ENCODE measurements at regions of chr10 and their contacts with region 1.

Region 1: DNA sequence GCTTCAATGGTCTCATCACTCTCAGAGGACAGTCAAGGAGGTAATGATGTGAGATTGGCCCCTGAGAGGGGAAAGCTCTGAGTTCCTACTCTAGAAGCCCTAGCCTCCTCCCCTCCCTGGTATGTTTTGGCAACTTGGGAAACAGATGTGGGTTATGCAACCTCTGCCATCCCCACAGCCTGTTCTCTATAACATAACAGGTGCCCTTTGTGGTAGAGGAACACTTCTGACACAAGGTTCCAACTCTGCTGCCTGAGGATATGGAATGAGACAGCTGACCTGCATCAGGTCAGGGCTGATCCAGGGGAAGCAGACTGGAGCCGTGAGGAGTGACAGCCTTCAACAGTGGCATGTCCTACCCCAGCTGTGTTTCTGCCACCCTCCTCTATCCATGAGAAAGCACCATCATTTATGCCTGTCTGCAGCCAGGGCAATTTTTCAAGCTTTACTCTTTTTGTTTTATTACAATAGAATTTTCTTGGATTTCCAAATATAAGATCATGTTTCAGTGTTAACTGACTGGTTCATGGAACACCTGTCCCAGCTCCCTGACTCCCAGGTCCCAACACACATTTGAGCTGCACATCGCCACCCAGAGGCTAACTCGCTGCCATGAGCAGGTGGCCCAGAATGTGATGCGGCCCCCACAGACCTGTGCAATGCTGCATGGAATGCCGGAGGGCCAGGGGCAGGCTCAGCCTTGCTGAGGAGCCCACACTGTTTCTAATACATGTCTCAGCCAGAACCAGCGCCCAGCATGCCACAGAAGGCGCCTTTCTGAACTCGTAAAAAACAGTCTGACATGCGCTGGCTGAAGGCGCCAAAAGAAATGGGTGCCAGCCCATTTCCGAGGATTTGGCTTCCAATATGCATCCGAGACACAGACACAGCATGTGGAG is 124.8 kb upstream of the CHST15 start:
- DNase-seq: peak; percentile 33 to 72
- H3K4me3 ChIP-seq: no peak overlapping the region
- H3K27ac ChIP-seq: no peak overlapping the region
- H3K4me1 ChIP-seq: peaks cover 0 to 8% (median 6%) of the 10 kb centered on the region in 4 experiments; a peak in 3 of 7 replicates
- H3K27me3 ChIP-seq: no peaks in the 10 kb centered on the region; a peak in 2 of 7 replicates
- CTCF ChIP-seq: peak; percentile 66 to 87 (median 78)
- EP300 ChIP-seq: no peak
- POLR2A ChIP-seq: no peak
- RAD21 ChIP-seq: peak; percentile 57 to 72

Region 2: GRCh38 chr10:124180947-124181549 is 37.1 kb before region 1 on chr10:
- CTCF ChIA-PET with region 1: interaction called, 13 read pairs
- POLR2A ChIA-PET with region 1: no interaction called
- DNase-seq: peak in 1 of 2 experiments; percentile 7
- H3K4me3 ChIP-seq: no peak overlapping the region
- H3K27ac ChIP-seq: no peak overlapping the region
- H3K4me1 ChIP-seq: no peaks in the 10 kb centered on the region; a peak in 1 of 7 replicates
- H3K27me3 ChIP-seq: no peaks in the 10 kb centered on the region
- CTCF ChIP-seq: no peak
- EP300 ChIP-seq: no peak
- POLR2A ChIP-seq: no peak
- RAD21 ChIP-seq: no peak

Region 3: GRCh38 chr10:124194199-124194824 is 23.8 kb before region 1 on chr10:
- CTCF ChIA-PET with region 1: interaction called, 22 read pairs
- POLR2A ChIA-PET with region 1: no interaction called
- DNase-seq: no peak
- H3K4me3 ChIP-seq: no peak overlapping the region
- H3K27ac ChIP-seq: no peak overlapping the region
- H3K4me1 ChIP-seq: no peaks in the 10 kb centered on the region
- H3K27me3 ChIP-seq: no peaks in the 10 kb centered on the region
- CTCF ChIP-seq: no peak
- EP300 ChIP-seq: no peak
- POLR2A ChIP-seq: no peak
- RAD21 ChIP-seq: no peak

Region 4: GRCh38 chr10:124206616-124207015 is 11.5 kb before region 1 on chr10:
- CTCF ChIA-PET with region 1: interaction called, 46 read pairs
- POLR2A ChIA-PET with region 1: interaction called, 4 read pairs
- DNase-seq: peak in 1 of 2 experiments; percentile 30
- H3K4me3 ChIP-seq: no peak overlapping the region
- H3K27ac ChIP-seq: no peak overlapping the region
- H3K4me1 ChIP-seq: no peaks in the 10 kb centered on the region
- H3K27me3 ChIP-seq: no peaks in the 10 kb centered on the region; a peak in 1 of 7 replicates
- CTCF ChIP-seq: no peak
- EP300 ChIP-seq: no peak
- POLR2A ChIP-seq: no peak
- RAD21 ChIP-seq: no peak

Region 5: GRCh38 chr10:124236816-124237215 is 18.7 kb after region 1 on chr10:
- CTCF ChIA-PET with region 1: interaction called, 18 read pairs
- POLR2A ChIA-PET with region 1: no interaction called
- DNase-seq: no peak
- H3K4me3 ChIP-seq: no peak overlapping the region; a peak in 1 of 8 replicates
- H3K27ac ChIP-seq: no peak overlapping the region
- H3K4me1 ChIP-seq: peaks cover 0 to 6% (median 3%) of the 10 kb centered on the region in 4 experiments; a peak in 6 of 7 replicates
- H3K27me3 ChIP-seq: no peaks in the 10 kb centered on the region; a peak in 2 of 7 replicates
- CTCF ChIP-seq: no peak
- EP300 ChIP-seq: no peak
- POLR2A ChIP-seq: no peak
- RAD21 ChIP-seq: no peak